ENCODE measurements at regions of chr2 and their contacts with region 1.

Region 1: GRCh38 chr2:11778923-11779757 is 32.7 kb downstream of the LPIN1 start:
- DNase-seq: peak; percentile 62
- H3K4me3 ChIP-seq: no peak overlapping the region
- H3K27ac ChIP-seq: peak overlapping the region; percentile 44
- H3K4me1 ChIP-seq: peaks cover 25% of the 10 kb centered on the region
- H3K27me3 ChIP-seq: no peaks in the 10 kb centered on the region
- CTCF ChIP-seq: peak; percentile 94 to 96
- POLR2A ChIP-seq: no peak

Region 2: DNA sequence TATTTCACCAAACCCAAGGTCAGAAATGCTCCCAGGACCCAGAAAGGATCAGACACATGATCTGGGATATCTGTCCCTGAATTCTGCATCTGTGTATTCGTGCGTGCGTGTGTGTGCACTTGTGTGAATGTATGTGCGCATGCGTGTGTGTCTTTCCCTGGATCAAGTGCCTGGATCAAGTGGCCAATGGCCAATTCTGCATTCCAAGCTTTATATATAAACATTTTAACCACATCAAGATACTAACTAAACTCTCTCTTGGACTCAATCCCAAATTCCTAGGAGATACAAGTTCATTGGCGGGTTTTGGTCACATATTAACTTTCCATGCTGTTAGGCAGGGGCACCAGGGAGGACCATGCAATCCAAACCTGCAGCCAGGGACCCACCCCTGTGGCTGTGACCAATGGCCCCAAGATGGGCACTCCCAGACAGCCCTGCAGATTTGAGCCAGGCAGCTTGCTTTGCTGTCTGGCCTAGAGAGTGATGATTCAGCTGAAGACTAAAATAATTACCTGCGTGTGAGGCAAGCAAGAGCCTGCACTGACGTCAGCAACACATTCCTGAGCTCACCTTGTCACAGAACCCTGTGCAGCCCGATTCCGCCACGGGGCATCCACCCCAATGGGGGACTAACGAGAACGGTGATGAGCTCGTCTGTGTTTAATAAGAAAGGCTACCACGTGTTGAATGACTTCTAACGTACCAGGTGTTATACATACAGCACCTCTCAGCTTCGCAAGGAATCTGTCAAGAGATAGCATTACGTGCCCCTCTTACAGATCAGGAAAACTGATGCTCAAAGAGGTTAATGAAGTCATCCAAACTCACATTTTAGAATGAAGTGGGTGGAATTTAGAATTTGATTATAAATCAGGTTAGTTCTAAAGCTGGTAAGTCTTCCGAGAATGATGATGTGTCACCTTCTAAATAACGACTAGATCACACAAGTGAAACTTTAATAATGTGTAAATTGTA is 389.3 kb before region 1 on chr2:
- CTCF ChIA-PET with region 1: no interaction called
- POLR2A ChIA-PET with region 1: no interaction called
- dilution Hi-C with region 1: no loop called
- intact Hi-C with region 1: no loop called
- DNase-seq: peak; percentile 62
- H3K4me3 ChIP-seq: no peak overlapping the region
- H3K27ac ChIP-seq: no peak overlapping the region
- H3K4me1 ChIP-seq: peaks cover 20% of the 10 kb centered on the region
- H3K27me3 ChIP-seq: no peaks in the 10 kb centered on the region
- CTCF ChIP-seq: no peak
- POLR2A ChIP-seq: no peak

Region 3: DNA sequence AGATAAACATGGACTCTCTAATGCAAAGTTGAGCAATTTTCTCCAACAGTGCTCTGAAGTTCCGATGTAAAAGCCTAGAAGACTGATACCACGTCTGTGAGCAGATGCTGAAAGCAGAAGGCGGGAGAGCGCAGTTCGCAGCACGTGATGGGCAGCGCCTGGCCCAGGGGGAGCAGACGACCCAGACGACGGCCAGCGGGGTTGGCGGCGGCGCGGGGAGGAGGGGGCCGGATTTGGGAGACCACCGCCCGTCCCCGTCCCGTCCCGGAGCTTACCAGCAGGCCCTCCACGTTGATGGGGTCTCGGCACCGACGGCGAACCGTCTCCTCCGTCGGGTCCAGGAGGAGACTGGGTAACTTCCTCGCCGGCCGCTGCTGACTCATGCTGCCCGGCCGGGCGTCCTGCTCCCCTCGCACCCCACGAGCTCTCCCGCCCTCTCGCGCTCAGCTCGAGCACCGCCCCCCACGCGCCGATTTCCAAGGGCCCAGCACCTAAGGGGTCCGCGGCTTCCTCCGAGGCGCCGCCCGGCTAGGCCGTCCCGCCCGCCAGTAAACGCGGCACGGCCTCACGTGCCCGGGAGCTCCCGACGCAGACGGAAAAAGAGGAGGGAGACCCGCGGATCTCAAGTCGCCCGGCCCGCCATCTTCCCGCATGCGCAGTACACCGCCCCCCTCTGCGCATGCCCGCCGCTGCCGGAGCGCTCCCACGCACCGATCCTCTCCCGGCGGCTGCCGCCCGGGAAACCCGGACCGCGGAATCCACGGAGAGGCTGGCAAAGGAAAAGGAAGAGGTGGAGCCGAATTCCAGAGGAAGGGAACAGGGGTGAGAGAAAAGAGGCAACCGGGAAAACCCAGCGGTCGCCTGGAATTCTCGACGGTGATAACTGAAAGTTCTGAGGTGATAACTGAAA is 313.4 kb before region 1 on chr2 and contains the start of gene E2F6:
- CTCF ChIA-PET with region 1: no interaction called
- POLR2A ChIA-PET with region 1: no interaction called
- dilution Hi-C with region 1: no loop called
- intact Hi-C with region 1: loop called (anchors 5 kb)
- DNase-seq: peak; percentile 93
- H3K4me3 ChIP-seq: peak within 1 kb of the TSS; percentile 45 to 82 (median 46)
- H3K27ac ChIP-seq: peak within 1 kb of the TSS; percentile 73
- H3K4me1 ChIP-seq: peaks cover 21% of the 10 kb centered on the region
- H3K27me3 ChIP-seq: no peaks in the 10 kb centered on the region
- CTCF ChIP-seq: no peak
- POLR2A ChIP-seq: no peak
- total RNA-seq, gene E2F6: 14.6 and 15.7 TPM in 2 replicates

Region 4: GRCh38 chr2:11583840-11584524 is 195.2 kb before region 1 on chr2:
- CTCF ChIA-PET with region 1: interaction called, 3 read pairs
- POLR2A ChIA-PET with region 1: no interaction called
- dilution Hi-C with region 1: no loop called
- intact Hi-C with region 1: loop called (anchors 5 kb)
- DNase-seq: peak; percentile 87
- H3K4me3 ChIP-seq: no peak overlapping the region
- H3K27ac ChIP-seq: no peak overlapping the region
- H3K4me1 ChIP-seq: no peaks in the 10 kb centered on the region
- H3K27me3 ChIP-seq: no peaks in the 10 kb centered on the region
- CTCF ChIP-seq: peak; percentile 81 to 82
- POLR2A ChIP-seq: no peak

Region 5: GRCh38 chr2:11681722-11682589 is 97.2 kb before region 1 on chr2:
- CTCF ChIA-PET with region 1: interaction called, 188 read pairs
- POLR2A ChIA-PET with region 1: no interaction called
- dilution Hi-C with region 1: no loop called
- intact Hi-C with region 1: no loop called
- DNase-seq: no peak
- H3K4me3 ChIP-seq: no peak overlapping the region
- H3K27ac ChIP-seq: no peak overlapping the region
- H3K4me1 ChIP-seq: no peaks in the 10 kb centered on the region
- H3K27me3 ChIP-seq: peaks cover 4 to 14% of the 10 kb centered on the region in 2 experiments
- CTCF ChIP-seq: peak; percentile 82 to 87
- POLR2A ChIP-seq: no peak

Region 6: GRCh38 chr2:11697103-11697871 is 81.9 kb before region 1 on chr2:
- CTCF ChIA-PET with region 1: interaction called, 47 read pairs
- POLR2A ChIA-PET with region 1: no interaction called
- dilution Hi-C with region 1: no loop called
- intact Hi-C with region 1: loop called (anchors 1 kb)
- DNase-seq: peak; percentile 70
- H3K4me3 ChIP-seq: no peak overlapping the region
- H3K27ac ChIP-seq: no peak overlapping the region
- H3K4me1 ChIP-seq: peaks cover 11% of the 10 kb centered on the region
- H3K27me3 ChIP-seq: no peaks in the 10 kb centered on the region
- CTCF ChIP-seq: no peak
- POLR2A ChIP-seq: no peak

Region 7: GRCh38 chr2:11743846-11744553 is 35.1 kb before region 1 on chr2:
- CTCF ChIA-PET with region 1: interaction called, 80 read pairs
- POLR2A ChIA-PET with region 1: no interaction called
- dilution Hi-C with region 1: no loop called
- intact Hi-C with region 1: loop called (anchors 1 kb)
- DNase-seq: peak; percentile 99
- H3K4me3 ChIP-seq: peak overlapping the region in 1 of 3 experiments; percentile 20
- H3K27ac ChIP-seq: peak overlapping the region; percentile 82
- H3K4me1 ChIP-seq: peaks cover 55% of the 10 kb centered on the region
- H3K27me3 ChIP-seq: no peaks in the 10 kb centered on the region
- CTCF ChIP-seq: no peak
- POLR2A ChIP-seq: no peak

Region 8: GRCh38 chr2:11967946-11968465 is 188.9 kb after region 1 on chr2:
- CTCF ChIA-PET with region 1: no interaction called
- POLR2A ChIA-PET with region 1: no interaction called
- dilution Hi-C with region 1: no loop called
- intact Hi-C with region 1: no loop called
- DNase-seq: no peak
- H3K4me3 ChIP-seq: no peak overlapping the region
- H3K27ac ChIP-seq: no peak overlapping the region
- H3K4me1 ChIP-seq: no peaks in the 10 kb centered on the region
- H3K27me3 ChIP-seq: peaks cover 2 to 5% of the 10 kb centered on the region in 2 experiments
- CTCF ChIP-seq: no peak
- POLR2A ChIP-seq: no peak

Measured in endothelial cell of umbilical vein (primary cell).